ENCODE measurements at regions of chr9 and their contacts with region 1.

Region 1: GRCh38 chr9:124624735-124624992 is 117.5 kb upstream of the NR5A1 start:
- DNase-seq: no peak
- ATAC-seq: no peak
- H3K4me3 ChIP-seq: no peak overlapping the region
- H3K4me3 Mint-ChIP-seq: no peak overlapping the region
- H3K27ac ChIP-seq: peak overlapping the region; percentile 24
- H3K27ac Mint-ChIP-seq: no peak overlapping the region
- H3K4me1 ChIP-seq: peaks cover 0 to 5% of the 10 kb centered on the region in 2 experiments
- H3K4me1 Mint-ChIP-seq: no peaks in the 10 kb centered on the region
- H3K27me3 ChIP-seq: no peaks in the 10 kb centered on the region
- H3K27me3 Mint-ChIP-seq: peaks cover 0 to 3% of the 10 kb centered on the region in 2 donors

Region 2: GRCh38 chr9:124660341-124660801 is 35.7 kb after region 1 on chr9:
- CTCF ChIA-PET with region 1: interaction called in 1 of 2 experiments, 3 read pairs
- POLR2A ChIA-PET with region 1: interaction called in 1 of 2 experiments, 11 read pairs
- DNase-seq: peak in 3 of 35 experiments; percentile 2 to 24 (median 7)
- ATAC-seq: no peak
- H3K4me3 ChIP-seq: peak overlapping the region; percentile 34 to 58
- H3K4me3 Mint-ChIP-seq: peak overlapping the region; percentile 67 to 88 (median 88)
- H3K27ac ChIP-seq: no peak overlapping the region
- H3K27ac Mint-ChIP-seq: peak overlapping the region in 1 of 2 donors; percentile 61
- H3K4me1 ChIP-seq: peaks cover 6 to 14% of the 10 kb centered on the region in 2 experiments
- H3K4me1 Mint-ChIP-seq: peaks cover 28 to 35% (median 31%) of the 10 kb centered on the region in 3 donors
- H3K27me3 ChIP-seq: peaks cover 0 to 8% of the 10 kb centered on the region in 2 experiments
- H3K27me3 Mint-ChIP-seq: peaks cover 3 to 16% of the 10 kb centered on the region in 2 donors

Region 3: GRCh38 chr9:126578029-126578428 is 1953.4 kb after region 1 on chr9:
- CTCF ChIA-PET with region 1: no interaction called
- POLR2A ChIA-PET with region 1: no interaction called
- DNase-seq: no peak
- ATAC-seq: no peak
- H3K4me3 ChIP-seq: no peak overlapping the region
- H3K4me3 Mint-ChIP-seq: no peak overlapping the region
- H3K27ac ChIP-seq: no peak overlapping the region
- H3K27ac Mint-ChIP-seq: no peak overlapping the region
- H3K4me1 ChIP-seq: no peaks in the 10 kb centered on the region
- H3K4me1 Mint-ChIP-seq: no peaks in the 10 kb centered on the region
- H3K27me3 ChIP-seq: peaks cover 3 to 34% of the 10 kb centered on the region in 2 experiments
- H3K27me3 Mint-ChIP-seq: peaks cover 24 to 40% of the 10 kb centered on the region in 2 donors

Measured in T-cell (primary cell).